Heart right ventricle (tissue), 16 donors: ENCODE measurements at regions of chr19 and their contacts with region 1.

Region 1: DNA sequence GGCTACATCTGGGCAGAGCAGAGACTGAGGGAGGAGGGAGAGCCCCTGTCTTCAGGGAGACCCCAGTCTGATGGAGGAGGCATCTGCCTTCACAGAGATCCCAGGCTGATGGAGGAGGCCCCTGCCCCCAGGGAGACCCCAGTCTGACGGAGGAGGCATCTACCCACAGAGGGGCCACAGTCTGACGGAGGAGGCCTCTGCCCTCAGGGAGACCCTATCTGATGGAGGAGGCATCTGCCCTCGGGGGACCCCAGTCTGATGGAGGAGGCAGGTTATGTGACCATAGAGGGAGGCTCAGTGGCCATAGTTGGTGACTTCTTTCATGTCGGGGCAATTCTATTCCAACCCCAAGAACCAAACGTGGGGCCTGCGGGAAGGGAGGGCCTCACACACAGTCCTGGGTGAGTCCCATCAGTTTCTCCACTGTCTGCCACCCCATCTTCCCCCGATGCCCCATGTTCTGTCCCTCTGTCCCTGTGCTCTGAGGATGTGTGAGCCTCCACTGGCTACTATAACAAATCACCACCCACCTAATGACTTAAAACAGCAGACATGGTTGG is 14.3 kb downstream of the MISP start:
- DNase-seq: no peak
- ATAC-seq: no peak
- H3K4me3 ChIP-seq: no peak overlapping the region
- H3K27ac ChIP-seq: no peak overlapping the region
- H3K4me1 ChIP-seq: peaks cover 0 to 3% (median 0%) of the 10 kb centered on the region in 9 donors
- H3K27me3 ChIP-seq: peaks cover 0 to 3% (median 0%) of the 10 kb centered on the region in 7 donors
- CTCF ChIP-seq: no peak

Region 2: DNA sequence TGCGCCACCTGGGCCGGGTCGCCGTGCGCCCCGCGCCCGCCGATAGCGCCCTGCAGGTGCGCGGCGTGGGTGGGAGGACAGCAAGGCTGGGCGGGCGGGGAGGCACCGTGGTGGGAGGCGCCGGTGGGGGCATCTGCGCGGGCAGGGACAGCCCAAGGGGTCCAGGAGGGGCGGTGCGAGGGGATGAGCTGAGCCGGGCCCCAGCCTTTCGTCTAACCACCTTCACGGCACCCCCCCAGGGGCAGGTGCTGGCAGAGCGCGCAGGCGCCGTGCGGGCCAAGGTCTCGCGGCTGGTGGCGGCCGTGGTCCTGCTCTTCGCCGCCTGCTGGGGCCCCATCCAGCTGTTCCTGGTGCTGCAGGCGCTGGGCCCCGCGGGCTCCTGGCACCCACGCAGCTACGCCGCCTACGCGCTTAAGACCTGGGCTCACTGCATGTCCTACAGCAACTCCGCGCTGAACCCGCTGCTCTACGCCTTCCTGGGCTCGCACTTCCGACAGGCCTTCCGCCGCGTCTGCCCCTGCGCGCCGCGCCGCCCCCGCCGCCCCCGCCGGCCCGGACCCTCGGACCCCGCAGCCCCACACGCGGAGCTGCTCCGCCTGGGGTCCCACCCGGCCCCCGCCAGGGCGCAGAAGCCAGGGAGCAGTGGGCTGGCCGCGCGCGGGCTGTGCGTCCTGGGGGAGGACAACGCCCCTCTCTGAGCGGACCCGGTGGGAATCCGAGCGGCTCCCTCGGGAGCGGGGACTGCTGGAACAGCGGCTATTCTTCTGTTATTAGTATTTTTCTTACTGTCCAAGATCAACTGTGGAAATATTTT is 155.0 kb after region 1 on chr19:
- intact Hi-C with region 1: loop called in 9 of 10 experiments (anchors 1 to 5 kb)
- DNase-seq: no peak
- ATAC-seq: peak in 2 of 8 donors; percentile 1 to 4
- H3K4me3 ChIP-seq: peak overlapping the region in 7 of 10 donors; percentile 5 to 48 (median 17)
- H3K27ac ChIP-seq: peak overlapping the region in 1 of 10 donors; percentile 26
- H3K4me1 ChIP-seq: peaks cover 13 to 68% (median 40%) of the 10 kb centered on the region in 9 donors
- H3K27me3 ChIP-seq: peaks cover 30 to 57% (median 55%) of the 10 kb centered on the region in 7 donors
- CTCF ChIP-seq: no peak